ENCODE measurements at regions of chr1 and their contacts with region 1.

Region 1: GRCh38 chr1:62725255-62725654 is 37.1 kb upstream of the DOCK7 start:
- DNase-seq: no peak
- ATAC-seq: peak in 2 of 8 donors; percentile 31 to 39
- H3K4me3 ChIP-seq: peak overlapping the region in 1 of 10 donors; percentile 8
- H3K27ac ChIP-seq: peak overlapping the region in 2 of 10 donors; percentile 16 to 23
- H3K4me1 ChIP-seq: peaks cover 5 to 38% (median 24%) of the 10 kb centered on the region in 9 donors
- H3K27me3 ChIP-seq: peaks cover 0 to 45% (median 20%) of the 10 kb centered on the region in 7 donors
- CTCF ChIP-seq: no peak

Region 2: GRCh38 chr1:62691062-62691844 is 34.0 kb before region 1 on chr1:
- intact Hi-C with region 1: loop called in 1 of 10 experiments (anchors 5 kb)
- DNase-seq: no peak
- ATAC-seq: no peak
- H3K4me3 ChIP-seq: no peak overlapping the region
- H3K27ac ChIP-seq: peak overlapping the region in 2 of 10 donors; percentile 51 to 83
- H3K4me1 ChIP-seq: peaks cover 5 to 42% (median 27%) of the 10 kb centered on the region in 9 donors
- H3K27me3 ChIP-seq: peaks cover 0 to 7% (median 4%) of the 10 kb centered on the region in 7 donors
- CTCF ChIP-seq: no peak

Region 3: GRCh38 chr1:62882201-62883104 is 157.2 kb after region 1 on chr1:
- intact Hi-C with region 1: no loop called
- DNase-seq: no peak
- ATAC-seq: no peak
- H3K4me3 ChIP-seq: no peak overlapping the region
- H3K27ac ChIP-seq: no peak overlapping the region
- H3K4me1 ChIP-seq: no peaks in the 10 kb centered on the region
- H3K27me3 ChIP-seq: peaks cover 0 to 63% (median 14%) of the 10 kb centered on the region in 7 donors
- CTCF ChIP-seq: no peak

Measured in heart right ventricle (tissue), 16 donors.